K562 (cell line): ENCODE measurements at regions of chr1 and their contacts with region 1.

Region 1: GRCh38 chr1:119549719-119550132 is 42.7 kb downstream of the HSD3B1 start:
- DNase-seq: peak; percentile 26 to 81 (median 44)
- ATAC-seq: peak; percentile 99
- H3K4me3 ChIP-seq: no peak overlapping the region
- H3K27ac ChIP-seq: no peak overlapping the region
- H3K4me1 ChIP-seq: no peaks in the 10 kb centered on the region; a peak in 1 of 5 replicates
- H3K27me3 ChIP-seq: no peaks in the 10 kb centered on the region
- CTCF ChIP-seq: peak; percentile 67 to 79 (median 69)
- EP300 ChIP-seq: no peak
- POLR2A ChIP-seq: no peak
- RAD21 ChIP-seq: peak; percentile 61 to 76

Region 2: DNA sequence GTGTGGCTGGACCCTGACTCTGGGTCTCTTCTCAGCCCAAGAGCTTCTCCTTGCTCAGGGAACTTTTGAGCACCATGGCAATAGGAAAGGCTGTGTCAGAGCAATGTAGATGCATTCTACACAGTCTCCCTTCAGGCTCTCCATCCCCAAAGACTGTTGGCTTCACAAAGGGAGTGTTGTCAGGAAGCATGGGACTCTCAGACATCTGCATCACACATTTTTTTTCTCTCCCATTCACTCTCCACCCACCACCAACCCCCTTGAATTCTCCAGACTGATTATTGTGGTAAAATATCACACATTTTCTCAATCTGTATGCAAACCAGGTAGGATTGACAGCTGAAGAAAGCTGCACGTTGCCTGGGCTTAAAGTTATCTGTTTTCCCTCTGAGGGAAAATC is 303.8 kb before region 1 on chr1:
- CTCF ChIA-PET with region 1: no interaction called
- POLR2A ChIA-PET with region 1: no interaction called
- in situ Hi-C with region 1: no loop called
- intact Hi-C with region 1: no loop called
- DNase-seq: no peak
- ATAC-seq: no peak
- H3K4me3 ChIP-seq: no peak overlapping the region
- H3K27ac ChIP-seq: no peak overlapping the region
- H3K4me1 ChIP-seq: no peaks in the 10 kb centered on the region
- H3K27me3 ChIP-seq: peaks cover 0 to 4% of the 10 kb centered on the region in 2 experiments; a peak in 2 of 5 replicates
- CTCF ChIP-seq: no peak
- EP300 ChIP-seq: no peak
- POLR2A ChIP-seq: no peak
- RAD21 ChIP-seq: no peak

Region 3: DNA sequence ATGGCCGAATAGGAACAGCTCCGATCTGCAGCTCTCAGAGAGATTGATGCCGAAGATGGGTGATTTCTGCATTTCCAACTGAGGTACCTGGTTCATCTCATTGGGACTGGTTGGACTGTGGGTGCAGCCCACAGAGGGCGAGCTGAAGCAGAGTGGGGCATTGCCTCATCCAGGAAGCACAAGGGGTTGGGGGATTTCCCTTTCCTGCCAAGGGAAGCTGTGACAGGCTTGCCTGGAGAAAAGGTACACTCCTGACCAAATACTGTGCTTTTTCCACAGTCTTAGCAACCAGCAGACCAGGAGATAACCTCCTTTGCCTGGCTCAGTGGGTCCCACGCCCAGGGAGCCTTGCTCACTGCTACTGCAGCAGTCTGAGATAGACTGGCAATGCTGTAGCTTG is 24.2 kb after region 1 on chr1:
- CTCF ChIA-PET with region 1: no interaction called
- POLR2A ChIA-PET with region 1: no interaction called
- in situ Hi-C with region 1: no loop called
- intact Hi-C with region 1: no loop called
- DNase-seq: no peak
- ATAC-seq: no peak
- H3K4me3 ChIP-seq: no peak overlapping the region
- H3K27ac ChIP-seq: no peak overlapping the region
- H3K4me1 ChIP-seq: no peaks in the 10 kb centered on the region
- H3K27me3 ChIP-seq: peaks cover 0 to 11% of the 10 kb centered on the region in 2 experiments; a peak in 2 of 5 replicates
- CTCF ChIP-seq: no peak
- EP300 ChIP-seq: no peak
- POLR2A ChIP-seq: no peak
- RAD21 ChIP-seq: no peak

Region 4: DNA sequence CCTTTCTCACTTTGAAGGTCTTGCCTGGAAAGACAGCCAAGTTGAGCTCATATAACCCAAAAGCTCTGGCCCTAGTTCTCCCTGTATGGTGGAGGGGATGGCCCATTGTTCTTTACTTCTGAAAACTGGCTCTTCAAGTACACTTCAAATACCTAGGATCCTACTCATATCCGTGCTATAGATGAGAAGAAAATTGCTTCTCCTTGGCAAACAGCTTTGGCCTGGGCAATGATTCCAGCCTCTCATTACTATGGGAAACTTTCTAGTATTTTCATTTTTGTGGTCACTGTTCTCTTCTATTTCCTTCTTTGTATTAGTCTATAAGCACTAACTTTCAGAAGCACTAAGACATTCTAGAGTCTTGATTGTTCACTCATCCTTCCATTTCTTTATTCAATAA is 44.6 kb after region 1 on chr1:
- CTCF ChIA-PET with region 1: no interaction called
- POLR2A ChIA-PET with region 1: no interaction called
- in situ Hi-C with region 1: no loop called
- intact Hi-C with region 1: no loop called
- DNase-seq: no peak
- ATAC-seq: no peak
- H3K4me3 ChIP-seq: no peak overlapping the region
- H3K27ac ChIP-seq: no peak overlapping the region
- H3K4me1 ChIP-seq: no peaks in the 10 kb centered on the region
- H3K27me3 ChIP-seq: peaks cover 0 to 5% of the 10 kb centered on the region in 2 experiments; a peak in 2 of 5 replicates
- CTCF ChIP-seq: no peak
- EP300 ChIP-seq: no peak
- POLR2A ChIP-seq: no peak
- RAD21 ChIP-seq: no peak

Region 5: DNA sequence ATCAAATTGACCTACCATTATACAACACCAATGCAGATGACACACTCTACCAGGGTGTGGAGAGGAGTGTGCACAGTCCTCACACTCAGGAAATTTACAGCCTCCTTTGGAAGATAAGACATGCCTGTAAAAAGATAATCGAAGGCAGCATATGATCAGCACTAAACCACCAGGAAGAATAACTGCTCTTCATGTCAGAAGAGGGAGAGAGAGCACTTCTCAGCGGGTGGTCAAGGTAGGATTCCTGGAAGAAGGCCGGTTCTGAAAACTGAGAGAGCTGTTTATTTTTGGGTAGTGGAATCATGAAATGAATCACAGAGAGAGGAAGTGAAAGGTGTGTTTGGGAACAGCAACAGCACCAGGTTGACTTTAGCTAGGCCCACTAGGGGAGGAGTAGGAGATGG is 112.3 kb after region 1 on chr1:
- CTCF ChIA-PET with region 1: no interaction called
- POLR2A ChIA-PET with region 1: no interaction called
- in situ Hi-C with region 1: no loop called
- intact Hi-C with region 1: loop called (anchors 1 kb)
- DNase-seq: peak in 1 of 4 experiments; percentile 28
- ATAC-seq: peak; percentile 24; the same call in 1 of the 3 replicates
- H3K4me3 ChIP-seq: no peak overlapping the region
- H3K27ac ChIP-seq: no peak overlapping the region
- H3K4me1 ChIP-seq: peaks cover 0 to 13% of the 10 kb centered on the region in 2 experiments; a peak in 3 of 5 replicates
- H3K27me3 ChIP-seq: peaks cover 4 to 7% of the 10 kb centered on the region in 2 experiments; a peak in 2 of 5 replicates
- CTCF ChIP-seq: no peak
- EP300 ChIP-seq: no peak
- POLR2A ChIP-seq: no peak
- RAD21 ChIP-seq: no peak; a peak in 1 of 4 replicates